KBM-7 (cell line): ENCODE measurements at regions of chr17 and their contacts with region 1.

Region 1: DNA sequence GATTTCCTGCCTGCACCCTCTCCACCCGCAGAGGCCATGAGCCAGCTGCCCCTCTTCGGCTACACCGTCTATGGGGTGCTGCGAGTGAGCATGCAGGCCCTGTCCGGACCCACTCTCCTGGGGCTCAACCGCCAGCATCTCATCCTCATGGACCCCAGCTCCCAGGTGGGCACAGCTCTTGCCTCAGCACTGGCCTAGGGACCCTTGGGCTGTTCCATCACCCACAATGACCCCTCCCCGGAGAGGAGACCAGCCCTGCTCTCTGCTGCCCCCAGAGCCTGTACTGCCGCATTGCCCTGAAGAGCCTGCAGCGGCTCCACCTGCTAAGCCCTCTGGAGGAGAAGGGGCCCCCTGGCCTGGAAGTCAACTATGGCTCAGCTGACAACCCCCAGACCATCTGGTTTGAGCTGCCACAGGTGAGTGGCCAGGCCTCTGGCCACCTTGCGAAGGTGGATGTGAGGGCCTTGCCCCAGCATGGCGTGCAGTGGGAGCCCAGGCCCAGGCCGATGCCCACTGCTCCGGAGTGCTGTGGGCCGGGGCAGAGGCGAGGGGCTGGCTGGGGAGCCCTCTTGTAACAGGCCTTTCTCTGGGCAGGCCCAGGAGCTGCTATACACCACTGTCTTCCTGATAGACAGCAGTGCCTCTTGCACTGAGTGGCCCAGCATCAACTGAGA is 7.3 kb upstream of the SMIM5 start:
- DNase-seq: peak; percentile 32

Region 2: GRCh38 chr17:75456417-75457046 is 169.4 kb before region 1 on chr17 and contains the start of gene TMEM94:
- in situ Hi-C with region 1: no loop called
- DNase-seq: peak; percentile 97

Region 3: GRCh38 chr17:75749545-75750389 is 123.8 kb after region 1 on chr17:
- in situ Hi-C with region 1: loop called (anchors 10 kb)
- DNase-seq: peak; percentile 78

Region 4: DNA sequence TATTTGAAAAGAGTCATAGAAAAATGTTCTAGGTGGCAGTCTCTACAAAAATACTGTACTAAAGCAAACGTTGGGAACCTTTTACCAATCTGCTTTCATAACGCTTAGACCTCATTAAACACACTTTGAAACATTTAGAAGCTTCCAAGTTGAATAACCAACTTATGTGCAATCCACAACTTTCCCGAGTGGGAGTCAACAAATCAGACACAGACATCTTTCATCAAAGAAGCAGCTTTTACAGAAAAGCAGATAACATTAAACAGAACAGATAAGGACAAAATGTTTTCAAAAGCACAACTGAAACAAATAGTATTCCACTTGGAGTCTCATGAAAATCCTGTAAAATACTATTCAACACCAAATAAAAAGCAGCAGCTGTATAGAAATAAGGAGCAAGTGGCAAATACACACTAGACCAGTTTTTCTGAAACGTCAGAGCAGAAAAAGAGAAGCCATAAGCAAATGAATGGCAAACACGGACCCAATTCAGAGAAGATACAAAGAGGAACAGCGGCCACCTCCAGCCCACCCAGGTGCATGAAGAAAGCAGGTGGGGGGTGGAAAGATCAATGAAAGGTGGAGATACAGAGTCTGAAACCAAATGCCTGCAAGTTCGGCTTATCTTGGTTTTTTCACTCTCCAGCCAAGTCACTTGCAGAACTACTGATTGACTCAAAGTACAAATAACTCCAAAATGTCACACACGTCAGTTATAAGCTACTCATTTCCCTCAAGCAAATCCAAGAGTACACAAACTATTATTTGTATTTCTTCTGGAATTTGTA is 333.3 kb after region 1 on chr17:
- in situ Hi-C with region 1: no loop called
- DNase-seq: no peak